ENCODE measurements at regions of chr11 and their contacts with region 1.

Region 1: DNA sequence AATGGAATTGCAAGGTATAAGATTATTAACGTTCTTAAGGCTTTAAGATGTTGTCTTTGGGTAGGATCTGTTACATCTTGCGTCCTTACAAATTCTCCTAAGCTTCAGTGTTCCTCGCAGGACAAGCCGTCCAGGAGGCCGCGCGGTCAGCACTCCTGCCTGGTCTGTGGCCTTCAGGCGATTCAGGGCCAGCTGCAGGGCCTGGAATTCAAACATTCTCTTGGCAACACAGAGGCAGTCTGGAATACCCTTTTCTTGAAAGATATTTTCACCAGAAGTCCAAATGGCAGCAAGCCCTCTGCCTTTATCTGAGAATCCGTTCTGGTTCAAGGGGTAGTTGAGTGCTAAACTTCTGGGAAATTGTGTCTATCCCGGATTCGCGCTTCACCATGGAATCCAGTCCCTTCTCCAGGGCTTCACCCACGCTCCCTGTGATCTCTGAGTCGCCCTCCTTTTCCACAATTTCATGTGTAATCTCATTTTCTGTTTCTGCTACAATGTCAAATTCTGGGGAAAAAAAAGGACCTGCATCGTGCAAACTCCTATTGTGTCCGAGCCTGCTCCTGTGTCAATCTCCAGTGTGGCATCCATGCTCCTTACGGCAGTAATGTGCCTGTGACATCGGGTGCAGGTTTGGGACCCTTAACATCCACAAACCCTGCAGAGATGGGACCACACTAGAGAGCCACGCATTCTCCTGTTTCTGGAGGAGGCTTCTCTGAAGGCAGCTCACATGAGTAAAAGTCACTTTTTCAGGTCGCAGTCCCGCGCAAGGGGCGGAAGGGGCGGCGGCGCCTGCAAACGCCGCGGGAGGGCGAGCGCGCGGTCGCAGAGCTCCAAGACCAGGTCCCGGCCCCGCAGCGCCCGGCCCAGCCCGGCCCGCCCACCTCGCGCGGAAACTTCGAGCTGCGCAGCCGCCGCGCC is 25.4 kb upstream of the SORL1 start:
- DNase-seq: peak; percentile 58
- ATAC-seq: peak; percentile 43
- H3K4me3 Mint-ChIP-seq: peak overlapping the region; percentile 70
- H3K27ac Mint-ChIP-seq: peak overlapping the region; percentile 64
- H3K4me1 Mint-ChIP-seq: peaks cover 88% of the 10 kb centered on the region
- H3K27me3 Mint-ChIP-seq: peaks cover 2% of the 10 kb centered on the region
- CTCF ChIP-seq: no peak

Region 2: GRCh38 chr11:120778685-120779490 is 647.9 kb before region 1 on chr11:
- CTCF ChIA-PET with region 1: no interaction called
- POLR2A ChIA-PET with region 1: no interaction called
- intact Hi-C with region 1: no loop called
- DNase-seq: no peak
- ATAC-seq: no peak
- H3K4me3 Mint-ChIP-seq: no peak overlapping the region
- H3K27ac Mint-ChIP-seq: no peak overlapping the region
- H3K4me1 Mint-ChIP-seq: no peaks in the 10 kb centered on the region
- H3K27me3 Mint-ChIP-seq: peaks cover 15% of the 10 kb centered on the region
- CTCF ChIP-seq: no peak

Region 3: GRCh38 chr11:121372671-121373429 is 53.9 kb before region 1 on chr11:
- CTCF ChIA-PET with region 1: interaction called, 4 read pairs
- POLR2A ChIA-PET with region 1: interaction called, 11 read pairs
- intact Hi-C with region 1: loop called (anchors 10 kb)
- DNase-seq: peak; percentile 29
- ATAC-seq: peak; percentile 94
- H3K4me3 Mint-ChIP-seq: peak overlapping the region; percentile 73
- H3K27ac Mint-ChIP-seq: peak overlapping the region; percentile 72
- H3K4me1 Mint-ChIP-seq: peaks cover 75% of the 10 kb centered on the region
- H3K27me3 Mint-ChIP-seq: no peaks in the 10 kb centered on the region
- CTCF ChIP-seq: no peak

Region 4: DNA sequence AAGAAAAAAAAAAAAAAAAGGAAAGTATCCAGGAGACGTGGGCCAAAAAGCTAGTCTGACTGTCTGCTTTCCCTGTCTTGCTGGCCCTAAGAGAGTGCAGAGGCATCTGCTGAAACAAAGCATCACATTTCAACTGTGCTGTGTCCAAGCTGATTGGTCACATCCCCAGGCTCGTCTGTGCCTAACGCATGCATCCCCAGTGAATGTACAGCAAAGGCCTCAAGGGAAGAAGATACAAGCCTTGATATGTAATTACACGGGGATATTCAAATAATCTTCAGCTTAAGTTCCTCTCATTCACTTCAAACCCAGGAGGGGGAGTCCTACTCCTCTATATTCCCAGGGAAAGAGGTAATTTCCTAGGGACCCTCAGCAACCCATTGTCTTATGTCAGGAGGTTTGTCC is 20.0 kb after region 1 on chr11:
- CTCF ChIA-PET with region 1: interaction called, 11 read pairs
- POLR2A ChIA-PET with region 1: interaction called, 192 read pairs
- intact Hi-C with region 1: loop called (anchors 1 kb)
- DNase-seq: no peak
- ATAC-seq: peak; percentile 49
- H3K4me3 Mint-ChIP-seq: peak overlapping the region; percentile 66
- H3K27ac Mint-ChIP-seq: peak overlapping the region; percentile 80
- H3K4me1 Mint-ChIP-seq: peaks cover 76% of the 10 kb centered on the region
- H3K27me3 Mint-ChIP-seq: no peaks in the 10 kb centered on the region
- CTCF ChIP-seq: no peak

Region 5: DNA sequence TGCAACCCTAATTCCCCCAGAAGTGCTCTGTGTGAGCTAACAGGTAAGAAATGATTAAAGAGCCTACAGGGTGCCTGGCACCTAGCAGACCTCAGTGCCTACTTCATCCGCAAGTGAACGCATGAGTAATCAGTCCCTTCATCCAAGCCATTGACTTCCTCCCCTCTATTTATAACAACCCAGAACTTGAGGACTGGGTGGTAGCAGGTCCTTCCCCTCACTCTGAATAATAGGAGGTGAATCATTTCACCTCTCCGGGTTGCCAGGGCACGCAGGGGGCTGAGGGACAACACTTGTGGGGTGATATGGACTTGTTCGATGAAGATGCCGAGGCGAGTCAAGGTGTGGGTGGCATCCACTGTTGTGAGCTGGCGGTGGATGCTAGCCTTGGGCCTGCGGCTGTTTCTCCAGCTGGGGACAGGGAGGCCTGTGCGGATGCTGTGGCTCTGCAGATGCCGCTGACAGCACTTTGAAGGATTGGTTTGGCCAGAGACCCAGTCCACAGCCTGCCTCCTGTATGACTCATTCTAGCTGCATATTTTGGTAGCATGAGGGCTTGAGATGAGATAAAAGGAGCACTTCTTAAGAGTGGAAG is 37.7 kb after region 1 on chr11:
- CTCF ChIA-PET with region 1: interaction called, 4 read pairs
- POLR2A ChIA-PET with region 1: interaction called, 12 read pairs
- intact Hi-C with region 1: loop called (anchors 1 kb)
- DNase-seq: no peak
- ATAC-seq: peak; percentile 51
- H3K4me3 Mint-ChIP-seq: peak overlapping the region; percentile 61
- H3K27ac Mint-ChIP-seq: peak overlapping the region; percentile 89
- H3K4me1 Mint-ChIP-seq: peaks cover 97% of the 10 kb centered on the region
- H3K27me3 Mint-ChIP-seq: no peaks in the 10 kb centered on the region
- CTCF ChIP-seq: no peak

Region 6: GRCh38 chr11:121814962-121815361 is 388.2 kb after region 1 on chr11:
- CTCF ChIA-PET with region 1: no interaction called
- POLR2A ChIA-PET with region 1: no interaction called
- intact Hi-C with region 1: no loop called
- DNase-seq: no peak
- ATAC-seq: no peak
- H3K4me3 Mint-ChIP-seq: no peak overlapping the region
- H3K27ac Mint-ChIP-seq: no peak overlapping the region
- H3K4me1 Mint-ChIP-seq: no peaks in the 10 kb centered on the region
- H3K27me3 Mint-ChIP-seq: no peaks in the 10 kb centered on the region
- CTCF ChIP-seq: no peak

Region 7: GRCh38 chr11:122717264-122717867 is 1290.6 kb after region 1 on chr11:
- CTCF ChIA-PET with region 1: no interaction called
- POLR2A ChIA-PET with region 1: no interaction called
- intact Hi-C with region 1: no loop called
- DNase-seq: peak; percentile 38
- ATAC-seq: peak; percentile 69
- H3K4me3 Mint-ChIP-seq: peak overlapping the region; percentile 47
- H3K27ac Mint-ChIP-seq: peak overlapping the region; percentile 80
- H3K4me1 Mint-ChIP-seq: peaks cover 83% of the 10 kb centered on the region
- H3K27me3 Mint-ChIP-seq: peaks cover 2% of the 10 kb centered on the region
- CTCF ChIP-seq: no peak

Measured in activated B cell treated with CpG ODN at 0.5 μM for 24 hours (primary cell).